ENCODE measurements at regions of chr3 and their contacts with region 1.

Region 1: GRCh38 chr3:87082796-87083440 is 92.0 kb upstream of the VGLL3 start:
- DNase-seq: peak; percentile 58
- H3K4me3 Mint-ChIP-seq: no peak overlapping the region
- H3K27ac Mint-ChIP-seq: no peak overlapping the region
- H3K4me1 Mint-ChIP-seq: peaks cover 9% of the 10 kb centered on the region
- H3K27me3 Mint-ChIP-seq: no peaks in the 10 kb centered on the region

Region 2: DNA sequence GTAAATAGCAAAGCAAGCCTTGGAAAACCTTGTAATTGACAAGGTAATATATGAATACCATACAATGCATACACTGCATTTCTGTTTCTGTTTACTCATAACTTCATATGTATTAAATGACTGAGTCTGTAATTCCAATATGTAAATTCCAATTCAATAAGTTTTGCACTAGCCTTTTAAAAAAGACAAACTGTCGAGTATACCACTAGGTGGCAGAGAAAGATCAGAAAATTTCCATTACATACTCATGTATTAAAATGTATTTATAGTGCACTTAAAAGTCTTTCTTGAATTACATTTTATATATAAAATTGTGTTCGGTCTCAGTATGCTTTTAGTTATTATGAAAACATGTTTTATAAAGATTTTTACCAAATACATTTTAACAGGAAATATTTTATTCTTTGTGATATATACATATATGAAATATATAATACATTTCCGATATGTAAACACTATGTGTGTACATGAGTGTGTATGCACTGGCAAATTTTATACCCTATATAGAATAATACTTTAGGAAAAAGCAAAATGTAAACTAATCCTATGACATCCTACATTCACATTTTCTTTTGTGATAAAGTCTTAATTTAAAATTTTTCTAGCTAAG is 308.7 kb before region 1 on chr3:
- intact Hi-C with region 1: loop called (anchors 2 kb)
- DNase-seq: no peak
- H3K4me3 Mint-ChIP-seq: no peak overlapping the region
- H3K27ac Mint-ChIP-seq: no peak overlapping the region
- H3K4me1 Mint-ChIP-seq: no peaks in the 10 kb centered on the region
- H3K27me3 Mint-ChIP-seq: no peaks in the 10 kb centered on the region

Region 3: GRCh38 chr3:86969500-86970189 is 113.3 kb before region 1 on chr3:
- intact Hi-C with region 1: loop called (anchors 5 kb)
- DNase-seq: peak; percentile 78
- H3K4me3 Mint-ChIP-seq: no peak overlapping the region
- H3K27ac Mint-ChIP-seq: no peak overlapping the region
- H3K4me1 Mint-ChIP-seq: no peaks in the 10 kb centered on the region
- H3K27me3 Mint-ChIP-seq: no peaks in the 10 kb centered on the region

Measured in activated CD4-positive, alpha-beta T cell treated with anti-CD3 and anti-CD28 coated beads, Interleukin-2, amount 10 ng/mL, durations not matched to agents 24 days and 14 days (primary cell).